ENCODE measurements at regions of chr4 and their contacts with region 1.

Region 1: GRCh38 chr4:80184053-80184790 is 13.1 kb upstream of the PRDM8 start:
- DNase-seq: peak; percentile 98
- H3K4me3 Mint-ChIP-seq: peak overlapping the region; percentile 96
- H3K27ac Mint-ChIP-seq: peak overlapping the region; percentile 95
- H3K4me1 Mint-ChIP-seq: peaks cover 48% of the 10 kb centered on the region
- H3K27me3 Mint-ChIP-seq: peaks cover 24% of the 10 kb centered on the region

Region 2: DNA sequence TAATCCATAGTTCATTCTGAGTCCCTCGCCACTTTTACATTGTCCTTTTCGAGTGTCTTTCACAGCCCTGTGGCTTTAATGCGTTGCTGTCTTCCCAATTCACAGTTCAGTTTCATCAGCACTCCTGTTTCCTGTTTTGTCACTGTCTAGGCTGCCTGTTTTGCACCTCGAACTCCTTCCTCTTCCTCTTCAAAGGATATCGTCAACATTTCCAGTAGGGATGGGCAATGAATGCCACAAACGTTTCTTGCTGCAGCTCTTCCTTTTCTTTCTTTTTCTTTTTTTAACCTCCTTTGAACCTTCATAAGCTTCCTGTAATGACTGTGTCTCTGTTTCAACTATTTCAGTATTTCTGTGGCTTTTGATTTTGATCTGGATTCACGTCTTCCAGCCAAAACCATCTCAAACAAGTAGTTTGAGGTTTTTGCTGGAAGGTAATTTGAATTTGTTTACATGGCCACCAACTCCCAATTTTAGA is 1527.2 kb before region 1 on chr4:
- intact Hi-C with region 1: loop called (anchors 2 kb)
- DNase-seq: peak; percentile 80
- H3K4me3 Mint-ChIP-seq: peak overlapping the region; percentile 61
- H3K27ac Mint-ChIP-seq: peak overlapping the region; percentile 65
- H3K4me1 Mint-ChIP-seq: peaks cover 38% of the 10 kb centered on the region
- H3K27me3 Mint-ChIP-seq: no peaks in the 10 kb centered on the region

Region 3: DNA sequence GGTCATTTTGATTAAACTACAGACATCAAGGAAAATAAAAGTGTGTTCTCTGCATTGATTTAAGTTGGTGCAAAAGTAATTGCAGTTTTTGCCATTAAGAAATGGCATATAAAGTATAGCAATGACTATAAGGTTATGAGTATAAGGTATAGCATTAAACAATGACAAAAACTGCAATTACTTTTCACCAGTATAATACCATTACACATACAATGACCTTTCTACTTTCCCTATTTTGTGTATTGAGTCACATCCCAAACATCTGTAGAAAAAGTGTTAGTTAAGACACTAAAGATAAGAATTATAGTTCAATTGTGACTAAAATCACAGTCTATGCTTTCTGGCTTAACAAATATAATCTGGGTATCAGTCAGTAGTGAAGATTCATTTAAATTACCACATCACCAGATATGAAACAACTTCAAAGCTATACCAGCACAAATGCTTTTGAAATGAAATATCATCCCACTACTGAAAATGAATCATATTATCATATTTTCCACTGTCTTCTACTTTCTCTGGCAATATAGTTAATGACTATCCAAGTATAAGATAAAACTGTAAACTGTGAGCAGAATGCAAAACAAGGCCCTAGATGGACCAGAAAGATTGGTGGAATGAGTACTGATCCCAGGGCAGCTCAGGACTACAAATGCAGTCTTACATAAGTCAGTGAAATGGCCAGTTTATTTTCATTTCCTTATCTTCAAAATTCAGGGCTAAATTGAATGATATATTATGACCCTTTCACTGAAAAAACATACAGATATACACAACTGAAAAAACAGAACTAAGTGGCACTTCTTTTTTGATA is 352.3 kb before region 1 on chr4:
- intact Hi-C with region 1: loop called (anchors 1 kb)
- DNase-seq: no peak
- H3K4me3 Mint-ChIP-seq: no peak overlapping the region
- H3K27ac Mint-ChIP-seq: no peak overlapping the region
- H3K4me1 Mint-ChIP-seq: no peaks in the 10 kb centered on the region
- H3K27me3 Mint-ChIP-seq: peaks cover 4% of the 10 kb centered on the region

Region 4: GRCh38 chr4:80058740-80059139 is 125.5 kb before region 1 on chr4:
- intact Hi-C with region 1: loop called (anchors 1 kb)
- DNase-seq: peak; percentile 87
- H3K4me3 Mint-ChIP-seq: peak overlapping the region; percentile 81
- H3K27ac Mint-ChIP-seq: peak overlapping the region; percentile 97
- H3K4me1 Mint-ChIP-seq: peaks cover 36% of the 10 kb centered on the region
- H3K27me3 Mint-ChIP-seq: no peaks in the 10 kb centered on the region

Region 5: GRCh38 chr4:80138551-80139538 is 45.4 kb before region 1 on chr4:
- intact Hi-C with region 1: loop called (anchors 1 kb)
- DNase-seq: peak; percentile 88
- H3K4me3 Mint-ChIP-seq: peak overlapping the region; percentile 56
- H3K27ac Mint-ChIP-seq: peak overlapping the region; percentile 80
- H3K4me1 Mint-ChIP-seq: peaks cover 59% of the 10 kb centered on the region
- H3K27me3 Mint-ChIP-seq: no peaks in the 10 kb centered on the region

Region 6: DNA sequence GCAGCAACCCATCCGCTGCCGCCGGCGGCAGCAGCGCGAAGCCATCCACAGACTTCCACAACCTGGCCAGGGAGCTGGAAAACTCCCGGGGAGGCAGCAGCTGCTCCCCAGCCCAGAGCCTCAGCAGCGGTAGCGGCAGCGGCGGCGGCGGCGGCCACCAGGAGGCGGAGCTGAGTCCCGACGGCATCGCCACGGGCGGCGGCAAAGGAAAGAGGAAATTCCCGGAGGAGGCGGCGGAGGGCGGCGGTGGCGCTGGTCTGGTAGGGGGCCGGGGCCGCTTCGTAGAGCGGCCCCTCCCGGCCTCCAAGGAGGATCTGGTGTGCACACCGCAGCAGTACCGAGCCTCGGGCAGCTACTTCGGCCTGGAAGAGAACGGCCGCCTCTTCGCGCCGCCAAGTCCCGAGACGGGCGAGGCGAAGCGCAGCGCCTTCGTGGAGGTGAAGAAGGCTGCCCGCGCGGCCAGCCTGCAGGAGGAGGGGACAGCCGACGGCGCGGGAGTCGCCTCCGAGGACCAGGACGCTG is 18.0 kb after region 1 on chr4:
- intact Hi-C with region 1: loop called (anchors 1 kb)
- DNase-seq: peak; percentile 95
- H3K4me3 Mint-ChIP-seq: peak overlapping the region; percentile 77
- H3K27ac Mint-ChIP-seq: peak overlapping the region; percentile 71
- H3K4me1 Mint-ChIP-seq: peaks cover 23% of the 10 kb centered on the region
- H3K27me3 Mint-ChIP-seq: peaks cover 40% of the 10 kb centered on the region

Measured in activated CD4-positive, alpha-beta T cell treated with anti-CD3 and anti-CD28 coated beads, Interleukin-2, amount 10 ng/mL, durations not matched to agents 24 days and 14 days (primary cell).